ENCODE measurements at regions of chr2 and their contacts with region 1.

Region 1: DNA sequence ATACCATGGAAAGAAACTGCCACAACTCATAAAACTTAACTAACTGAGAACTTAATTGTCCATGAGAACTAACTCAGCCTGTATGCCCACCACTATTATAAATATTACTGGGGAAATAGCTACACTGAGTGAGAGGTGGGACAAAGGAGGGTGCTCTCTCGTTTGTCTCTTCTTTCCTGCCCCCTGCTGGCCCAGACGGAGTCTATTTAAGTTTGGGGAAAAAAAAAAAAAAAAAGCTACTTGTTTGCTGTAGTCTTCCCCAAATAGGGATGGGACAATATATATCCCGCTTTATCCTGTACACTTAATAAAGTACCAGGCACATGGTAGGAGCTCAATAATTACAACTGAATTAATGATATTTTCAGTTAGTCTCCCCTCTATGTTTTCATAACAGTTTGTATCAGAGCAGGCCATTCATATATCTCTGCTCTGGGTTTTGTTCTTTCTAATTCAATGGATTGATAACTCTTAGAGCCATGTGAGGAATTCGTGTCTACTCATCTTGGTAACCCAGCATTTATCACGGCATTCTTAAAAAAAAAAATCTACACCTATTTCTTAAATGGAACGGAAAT is 647.6 kb upstream of the PKDCC start:
- DNase-seq: peak in 1 of 2 experiments; percentile 51
- H3K4me3 ChIP-seq: no peak overlapping the region
- H3K27ac ChIP-seq: no peak overlapping the region
- H3K4me1 ChIP-seq: 0 out of 7 replicates have a peak, but pooled peaks cover 0 to 2% (median 1%) of the 10 kb centered on the region in 4 experiments
- H3K27me3 ChIP-seq: no peaks in the 10 kb centered on the region
- CTCF ChIP-seq: peak; percentile 20 to 39 (median 29); a peak in 3 of 4 replicates
- EP300 ChIP-seq: no peak
- POLR2A ChIP-seq: no peak
- RAD21 ChIP-seq: peak; percentile 56 to 67

Region 2: GRCh38 chr2:41127351-41127750 is 272.8 kb before region 1 on chr2:
- CTCF ChIA-PET with region 1: no interaction called
- POLR2A ChIA-PET with region 1: no interaction called
- DNase-seq: no peak
- H3K4me3 ChIP-seq: no peak overlapping the region
- H3K27ac ChIP-seq: no peak overlapping the region
- H3K4me1 ChIP-seq: no peaks in the 10 kb centered on the region
- H3K27me3 ChIP-seq: no peaks in the 10 kb centered on the region
- CTCF ChIP-seq: no peak
- EP300 ChIP-seq: no peak
- POLR2A ChIP-seq: no peak
- RAD21 ChIP-seq: no peak

Region 3: GRCh38 chr2:41414486-41415230 is 14.5 kb after region 1 on chr2:
- CTCF ChIA-PET with region 1: interaction called, 18 read pairs
- POLR2A ChIA-PET with region 1: no interaction called
- DNase-seq: peak; percentile 1 to 49
- H3K4me3 ChIP-seq: no peak overlapping the region
- H3K27ac ChIP-seq: no peak overlapping the region
- H3K4me1 ChIP-seq: no peaks in the 10 kb centered on the region; a peak in 1 of 7 replicates
- H3K27me3 ChIP-seq: peaks cover 0 to 1% (median 0%) of the 10 kb centered on the region in 4 experiments; a peak in 1 of 7 replicates
- CTCF ChIP-seq: peak; percentile 14 to 77 (median 67)
- EP300 ChIP-seq: no peak
- POLR2A ChIP-seq: no peak
- RAD21 ChIP-seq: peak; percentile 87 to 91